ENCODE measurements at regions of chr10 and their contacts with region 1.

Region 1: DNA sequence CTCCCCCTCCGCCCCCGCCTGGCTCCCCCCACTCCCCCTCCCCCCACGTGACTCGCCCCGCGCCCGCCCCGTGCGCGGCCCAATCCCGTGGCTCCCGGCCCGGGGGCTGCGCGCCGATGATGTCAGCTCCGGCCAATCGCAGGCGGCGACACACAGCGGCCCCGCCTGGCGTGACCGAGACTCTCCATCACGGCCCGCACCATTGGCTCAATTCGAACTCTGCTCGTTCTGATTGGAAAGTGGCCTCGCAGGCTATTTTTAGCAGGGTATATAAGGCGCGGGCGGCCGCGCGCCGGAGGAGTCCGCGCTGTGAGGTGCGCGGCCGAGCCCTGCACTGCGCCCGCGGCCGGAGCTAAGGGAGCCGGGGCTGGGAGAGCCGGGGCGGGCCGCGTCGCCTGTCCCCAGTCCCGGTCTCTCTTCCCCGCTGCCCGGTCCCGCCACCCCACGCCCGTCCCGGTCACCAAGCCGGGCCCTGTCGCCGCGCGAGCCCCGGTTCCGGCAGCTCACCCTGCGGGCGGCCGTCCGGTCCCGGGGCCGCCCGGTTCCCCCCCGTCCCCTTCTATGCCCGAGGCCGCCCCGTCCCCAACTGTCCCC is 345 bp upstream of the KLF6 start:
- DNase-seq: peak; percentile 97
- ATAC-seq: peak; percentile 81
- H3K4me3 ChIP-seq: peak overlapping the region; percentile 91
- H3K27ac ChIP-seq: peak overlapping the region; percentile 97
- H3K4me1 ChIP-seq: peaks cover 15% of the 10 kb centered on the region
- H3K27me3 ChIP-seq: no peaks in the 10 kb centered on the region
- CTCF ChIP-seq: no peak
- POLR2A ChIP-seq: peak; percentile 94
- RAD21 ChIP-seq: peak; percentile 18; the same call in 1 of the 2 replicates

Region 2: DNA sequence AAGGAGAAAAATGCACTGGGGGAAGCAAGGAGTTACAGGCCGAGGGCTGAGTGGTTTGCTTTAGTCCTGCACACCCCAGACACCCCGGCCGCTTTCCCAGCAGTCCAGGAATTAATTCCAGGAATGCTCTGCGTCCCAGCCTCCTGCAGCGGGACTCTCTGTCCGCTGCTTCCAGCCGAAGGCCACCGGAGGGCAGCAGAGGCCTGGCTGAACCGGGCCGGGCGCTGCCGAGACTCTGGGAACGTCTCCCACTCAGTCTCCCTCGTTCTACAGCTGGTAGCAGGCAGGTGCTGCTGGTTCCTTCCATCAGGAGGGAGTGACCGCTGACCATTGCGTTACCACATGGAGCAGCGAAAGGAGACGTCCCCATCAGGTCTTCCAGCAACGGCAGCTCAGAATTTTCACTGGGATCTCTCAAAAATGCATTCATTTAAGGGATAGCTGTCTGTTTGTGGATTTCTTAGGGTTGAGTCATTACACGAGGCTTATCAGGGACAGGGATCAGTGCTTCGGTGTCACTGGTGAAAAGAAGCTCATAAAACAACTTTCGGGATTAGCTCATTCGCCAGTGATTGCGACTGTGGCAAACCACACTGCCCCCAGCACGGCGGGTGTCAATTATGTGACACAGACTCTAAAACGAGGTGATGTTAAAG is 587.9 kb before region 1 on chr10:
- CTCF ChIA-PET with region 1: interaction called, 3 read pairs
- POLR2A ChIA-PET with region 1: interaction called, 4 read pairs
- dilution Hi-C with region 1: no loop called
- in situ Hi-C with region 1: no loop called
- intact Hi-C with region 1: loop called (anchors 1 kb)
- DNase-seq: peak; percentile 84
- ATAC-seq: peak; percentile 91
- H3K4me3 ChIP-seq: peak overlapping the region; percentile 37
- H3K27ac ChIP-seq: peak overlapping the region; percentile 12
- H3K4me1 ChIP-seq: peaks cover 10% of the 10 kb centered on the region
- H3K27me3 ChIP-seq: peaks cover 9% of the 10 kb centered on the region
- CTCF ChIP-seq: peak; percentile 95
- POLR2A ChIP-seq: peak; percentile 66
- RAD21 ChIP-seq: peak; percentile 98

Region 3: DNA sequence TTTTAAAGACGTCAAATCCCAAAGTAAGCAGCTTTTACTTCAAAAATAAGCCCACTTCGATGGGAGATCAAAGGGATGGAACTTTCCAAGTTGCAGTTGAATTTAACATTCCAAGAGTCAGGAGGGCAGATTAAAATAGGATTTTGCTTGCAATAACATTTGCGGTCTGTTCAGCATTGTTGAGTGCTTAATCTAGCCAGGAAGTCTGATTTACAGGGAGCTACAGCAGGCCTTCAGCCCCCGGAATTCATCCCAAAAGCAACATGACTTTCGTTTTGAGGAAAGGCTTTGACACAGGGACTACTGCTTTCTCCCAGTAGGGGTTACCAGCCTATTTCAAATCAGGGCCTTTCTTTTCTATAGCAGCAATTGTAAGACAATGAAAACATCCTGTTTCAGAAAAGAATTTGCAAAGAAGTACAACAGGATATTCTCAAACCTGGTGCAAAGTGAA is 333.2 kb before region 1 on chr10:
- CTCF ChIA-PET with region 1: no interaction called
- POLR2A ChIA-PET with region 1: interaction called, 4 read pairs
- dilution Hi-C with region 1: no loop called
- in situ Hi-C with region 1: no loop called
- intact Hi-C with region 1: loop called (anchors 1 kb)
- DNase-seq: peak; percentile 97
- ATAC-seq: peak; percentile 92
- H3K4me3 ChIP-seq: peak overlapping the region; percentile 17; the same call in 1 of the 2 replicates
- H3K27ac ChIP-seq: peak overlapping the region; percentile 95; the same call in 1 of the 2 replicates
- H3K4me1 ChIP-seq: peaks cover 13% of the 10 kb centered on the region
- H3K27me3 ChIP-seq: no peaks in the 10 kb centered on the region
- CTCF ChIP-seq: peak; percentile 68
- POLR2A ChIP-seq: 0 out of 2 replicates have a peak, but pooled peaks have one; percentile 37
- RAD21 ChIP-seq: peak; percentile 75

Region 4: GRCh38 chr10:3887885-3888476 is 102.6 kb after region 1 on chr10:
- CTCF ChIA-PET with region 1: no interaction called
- POLR2A ChIA-PET with region 1: interaction called, 6 read pairs
- dilution Hi-C with region 1: no loop called
- in situ Hi-C with region 1: no loop called
- intact Hi-C with region 1: loop called (anchors 5 kb)
- DNase-seq: peak; percentile 97
- ATAC-seq: peak; percentile 70
- H3K4me3 ChIP-seq: no peak overlapping the region
- H3K27ac ChIP-seq: peak overlapping the region; percentile 90
- H3K4me1 ChIP-seq: peaks cover 29% of the 10 kb centered on the region
- H3K27me3 ChIP-seq: no peaks in the 10 kb centered on the region
- CTCF ChIP-seq: no peak
- POLR2A ChIP-seq: peak; percentile 52; the same call in 1 of the 2 replicates
- RAD21 ChIP-seq: peak; percentile 28

Region 5: GRCh38 chr10:4034907-4035598 is 249.7 kb after region 1 on chr10:
- CTCF ChIA-PET with region 1: no interaction called
- POLR2A ChIA-PET with region 1: no interaction called
- dilution Hi-C with region 1: no loop called
- in situ Hi-C with region 1: no loop called
- intact Hi-C with region 1: loop called (anchors 10 kb)
- DNase-seq: peak; percentile 41
- ATAC-seq: peak; percentile 65
- H3K4me3 ChIP-seq: peak overlapping the region; percentile 11; the same call in 1 of the 2 replicates
- H3K27ac ChIP-seq: peak overlapping the region; percentile 23; the same call in 1 of the 2 replicates
- H3K4me1 ChIP-seq: peaks cover 4% of the 10 kb centered on the region
- H3K27me3 ChIP-seq: no peaks in the 10 kb centered on the region
- CTCF ChIP-seq: no peak
- POLR2A ChIP-seq: no peak
- RAD21 ChIP-seq: no peak

Region 6: DNA sequence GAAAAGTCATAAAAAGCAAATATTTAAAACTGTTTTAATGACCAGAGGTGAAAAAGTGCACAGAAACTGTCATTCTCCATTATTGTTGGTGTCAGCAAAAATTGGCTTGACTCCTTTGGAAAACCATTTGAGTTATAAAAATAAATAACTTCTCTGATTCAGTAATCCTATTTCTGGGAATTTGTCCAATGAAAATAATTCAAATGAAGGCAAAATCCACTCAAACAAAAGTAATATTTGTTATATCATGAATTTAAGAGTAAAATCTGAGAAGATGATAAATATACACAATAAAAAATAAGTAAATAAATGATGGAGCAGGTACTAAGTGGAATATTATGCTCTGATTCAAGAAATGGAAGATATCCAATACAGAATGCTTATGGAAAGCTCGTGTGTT is 326.3 kb after region 1 on chr10:
- CTCF ChIA-PET with region 1: no interaction called
- POLR2A ChIA-PET with region 1: no interaction called
- dilution Hi-C with region 1: no loop called
- in situ Hi-C with region 1: no loop called
- intact Hi-C with region 1: no loop called
- DNase-seq: peak; percentile 76
- ATAC-seq: no peak
- H3K4me3 ChIP-seq: no peak overlapping the region
- H3K27ac ChIP-seq: no peak overlapping the region
- H3K4me1 ChIP-seq: peaks cover 3% of the 10 kb centered on the region
- H3K27me3 ChIP-seq: no peaks in the 10 kb centered on the region
- CTCF ChIP-seq: no peak
- POLR2A ChIP-seq: no peak
- RAD21 ChIP-seq: no peak

Region 7: DNA sequence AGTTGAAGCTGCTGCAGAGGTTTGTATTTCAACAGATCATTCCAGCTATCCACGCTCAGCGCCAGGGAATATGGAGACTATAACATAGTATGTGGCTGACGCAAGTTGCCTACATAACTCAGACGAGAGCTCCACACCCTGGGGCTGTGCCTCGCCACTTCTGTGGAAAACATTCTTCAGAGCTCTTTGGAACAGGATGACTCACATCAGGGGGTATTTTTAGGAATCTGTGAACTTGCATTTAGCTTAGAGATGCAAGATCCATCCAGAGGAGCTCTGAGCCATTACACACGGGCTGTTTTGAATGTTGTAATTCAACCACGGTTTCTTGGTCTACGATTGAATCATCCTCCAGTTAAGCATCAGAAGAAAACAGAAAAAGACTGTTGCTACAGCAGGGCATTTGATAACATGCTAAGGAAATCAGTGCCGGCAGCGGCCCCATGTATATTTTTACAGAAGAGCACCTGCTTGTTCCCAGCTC is 559.2 kb after region 1 on chr10:
- CTCF ChIA-PET with region 1: no interaction called
- POLR2A ChIA-PET with region 1: interaction called, 4 read pairs
- dilution Hi-C with region 1: no loop called
- in situ Hi-C with region 1: no loop called
- intact Hi-C with region 1: loop called (anchors 1 kb)
- DNase-seq: peak; percentile 100
- ATAC-seq: peak; percentile 99
- H3K4me3 ChIP-seq: no peak overlapping the region
- H3K27ac ChIP-seq: peak overlapping the region; percentile 82
- H3K4me1 ChIP-seq: peaks cover 9% of the 10 kb centered on the region
- H3K27me3 ChIP-seq: no peaks in the 10 kb centered on the region
- CTCF ChIP-seq: peak; percentile 30; the same call in 1 of the 2 replicates
- POLR2A ChIP-seq: peak; percentile 13; the same call in 1 of the 2 replicates
- RAD21 ChIP-seq: peak; percentile 53

Region 8: GRCh38 chr10:4663162-4663904 is 878.0 kb after region 1 on chr10:
- CTCF ChIA-PET with region 1: no interaction called
- POLR2A ChIA-PET with region 1: interaction called, 4 read pairs
- dilution Hi-C with region 1: no loop called
- in situ Hi-C with region 1: loop called (anchors 5 kb)
- intact Hi-C with region 1: no loop called
- DNase-seq: peak; percentile 99
- ATAC-seq: peak; percentile 94
- H3K4me3 ChIP-seq: peak overlapping the region; percentile 8; the same call in 1 of the 2 replicates
- H3K27ac ChIP-seq: peak overlapping the region; percentile 92
- H3K4me1 ChIP-seq: peaks cover 15% of the 10 kb centered on the region
- H3K27me3 ChIP-seq: no peaks in the 10 kb centered on the region
- CTCF ChIP-seq: no peak
- POLR2A ChIP-seq: peak; percentile 86
- RAD21 ChIP-seq: peak; percentile 6; the same call in 1 of the 2 replicates